Activated CD8-positive, alpha-beta T cell treated with anti-CD3 and anti-CD28 coated beads for 36 hours (primary cell): ENCODE measurements at regions of chr10 and their contacts with region 1.

Region 1: DNA sequence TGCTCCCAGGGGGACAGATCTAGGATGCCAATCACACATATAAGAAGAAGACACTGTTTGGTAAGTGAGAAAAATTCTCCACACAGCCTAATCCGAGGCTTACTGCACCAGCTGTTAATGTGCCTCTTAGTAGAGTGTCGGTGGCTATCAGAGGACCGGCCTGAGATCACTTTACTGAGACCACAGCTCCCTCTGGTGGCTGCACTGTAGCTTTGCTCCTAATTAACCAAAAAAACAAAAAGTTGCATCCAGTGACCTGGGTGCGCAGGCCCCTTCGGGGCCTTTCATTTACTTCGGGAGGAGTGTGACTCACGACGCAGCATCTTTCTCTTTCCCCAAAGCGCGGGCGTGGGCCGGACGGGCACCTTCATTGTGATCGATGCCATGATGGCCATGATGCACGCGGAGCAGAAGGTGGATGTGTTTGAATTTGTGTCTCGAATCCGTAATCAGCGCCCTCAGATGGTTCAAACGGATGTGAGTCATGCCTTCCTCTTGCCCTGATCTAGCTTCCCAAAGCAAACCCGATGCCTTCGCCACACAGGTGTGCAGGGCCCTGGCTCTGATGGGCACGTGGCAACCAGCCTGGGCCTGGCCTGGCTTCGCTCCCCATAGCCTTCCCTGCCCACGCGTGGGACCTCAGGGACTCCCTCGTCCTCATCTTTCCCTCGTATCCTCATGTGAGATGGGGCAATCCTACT is 56.7 kb downstream of the MKI67 start:
- DNase-seq: peak; percentile 81
- ATAC-seq: peak; percentile 27
- H3K4me3 Mint-ChIP-seq: no peak overlapping the region
- H3K27ac Mint-ChIP-seq: no peak overlapping the region
- H3K4me1 Mint-ChIP-seq: peaks cover 29% of the 10 kb centered on the region
- H3K27me3 Mint-ChIP-seq: no peaks in the 10 kb centered on the region
- CTCF ChIP-seq: peak; percentile 87

Region 2: DNA sequence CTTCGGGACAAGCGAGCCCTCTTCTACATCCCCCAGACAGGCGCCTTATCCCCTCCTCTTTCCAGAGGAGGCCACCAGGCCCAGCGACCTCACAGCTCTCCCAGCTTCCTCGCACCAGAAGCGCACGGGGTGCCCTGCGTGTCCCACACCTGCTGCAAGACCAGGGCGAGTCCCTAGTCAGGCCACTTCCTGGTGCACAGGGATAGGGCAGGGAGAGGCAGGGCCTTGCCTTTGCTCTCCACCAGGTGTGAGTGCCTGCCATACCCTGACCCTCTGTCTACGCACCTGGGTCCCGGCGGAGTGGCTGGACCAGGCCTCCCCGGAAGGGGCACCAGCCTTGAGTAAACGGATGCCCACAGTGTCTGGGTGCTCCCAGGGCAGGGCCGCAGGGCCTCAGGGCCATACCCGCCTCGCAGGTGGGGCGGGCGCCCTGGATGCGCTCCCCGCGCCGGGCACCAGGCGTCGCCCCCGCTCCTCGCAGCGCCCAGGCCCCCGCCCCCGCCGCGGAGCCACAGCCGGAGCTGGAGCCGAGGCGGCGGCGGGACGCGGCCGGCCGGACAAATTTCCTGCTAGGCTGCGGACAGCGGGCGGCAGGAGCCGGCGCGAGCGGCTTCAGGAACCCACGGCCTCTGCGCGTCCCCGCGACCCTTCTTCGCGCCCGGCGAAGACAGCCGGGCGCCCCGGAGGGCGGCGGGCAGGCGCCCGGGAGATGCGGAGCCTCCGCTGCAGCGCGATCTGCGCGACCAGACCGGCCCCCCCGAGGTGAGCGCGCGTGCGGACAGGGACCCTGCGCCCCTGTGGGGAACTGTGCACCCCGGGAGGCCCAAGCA is 162.7 kb before region 1 on chr10 and contains the start of gene PTPRE:
- CTCF ChIA-PET with region 1: interaction called, 13 read pairs
- POLR2A ChIA-PET with region 1: no interaction called
- intact Hi-C with region 1: loop called (anchors 2 kb)
- DNase-seq: peak; percentile 73
- ATAC-seq: peak; percentile 99
- H3K4me3 Mint-ChIP-seq: no peak within 1 kb of the TSS
- H3K27ac Mint-ChIP-seq: no peak within 1 kb of the TSS
- H3K4me1 Mint-ChIP-seq: no peaks in the 10 kb centered on the region
- H3K27me3 Mint-ChIP-seq: peaks cover 31% of the 10 kb centered on the region
- CTCF ChIP-seq: peak; percentile 86
- total RNA-seq, gene PTPRE: 19.9 to 22.3 TPM

Region 3: DNA sequence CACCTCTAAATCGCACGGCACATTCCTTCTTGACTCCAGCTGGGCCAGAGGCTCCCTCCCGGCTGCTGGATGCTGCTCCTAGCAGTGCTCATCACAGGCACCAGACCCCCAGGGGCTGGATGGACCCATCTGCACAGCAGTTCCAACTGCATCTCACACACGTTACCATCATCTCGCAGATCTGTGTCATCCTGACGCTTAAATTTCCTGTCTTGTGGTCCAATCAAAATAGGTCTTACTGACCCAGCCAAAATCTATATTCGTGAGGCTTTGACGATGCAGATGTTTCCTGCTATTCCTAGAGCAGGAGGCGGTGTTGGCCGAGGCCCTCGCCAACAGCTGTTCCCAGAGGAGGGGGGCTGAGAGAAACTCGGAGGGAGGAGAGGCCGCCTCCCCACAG is 51.3 kb before region 1 on chr10:
- CTCF ChIA-PET with region 1: interaction called, 35 read pairs
- POLR2A ChIA-PET with region 1: no interaction called
- intact Hi-C with region 1: loop called (anchors 10 kb)
- DNase-seq: no peak
- ATAC-seq: peak; percentile 64
- H3K4me3 Mint-ChIP-seq: peak overlapping the region; percentile 47
- H3K27ac Mint-ChIP-seq: no peak overlapping the region
- H3K4me1 Mint-ChIP-seq: peaks cover 6% of the 10 kb centered on the region
- H3K27me3 Mint-ChIP-seq: peaks cover 4% of the 10 kb centered on the region
- CTCF ChIP-seq: no peak

Region 4: GRCh38 chr10:128026614-128027300 is 42.7 kb before region 1 on chr10:
- CTCF ChIA-PET with region 1: interaction called, 23 read pairs
- POLR2A ChIA-PET with region 1: interaction called, 8 read pairs
- intact Hi-C with region 1: no loop called
- DNase-seq: peak; percentile 84
- ATAC-seq: peak; percentile 87
- H3K4me3 Mint-ChIP-seq: no peak overlapping the region
- H3K27ac Mint-ChIP-seq: peak overlapping the region; percentile 75
- H3K4me1 Mint-ChIP-seq: peaks cover 31% of the 10 kb centered on the region
- H3K27me3 Mint-ChIP-seq: no peaks in the 10 kb centered on the region
- CTCF ChIP-seq: no peak

Region 5: DNA sequence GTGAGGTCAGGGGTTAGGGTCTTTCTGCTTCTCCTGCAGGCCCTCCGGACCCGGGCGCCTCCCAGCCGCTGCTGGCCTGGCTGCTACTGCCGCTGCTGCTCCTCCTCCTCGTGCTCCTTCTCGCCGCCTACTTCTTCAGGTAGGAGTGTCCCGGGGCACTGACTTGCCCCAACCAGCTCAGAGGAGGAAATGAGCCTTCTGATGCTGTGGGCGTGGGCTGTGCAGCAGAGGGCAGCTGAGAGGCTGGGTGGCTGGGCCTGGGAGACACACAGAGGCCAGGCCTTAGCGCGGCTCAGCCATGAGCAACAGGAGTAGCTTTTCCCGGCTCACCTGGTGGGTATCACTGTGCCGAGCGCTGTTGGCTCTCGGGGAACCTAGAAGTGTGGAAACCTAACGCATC is 22.1 kb before region 1 on chr10:
- CTCF ChIA-PET with region 1: interaction called, 37 read pairs
- POLR2A ChIA-PET with region 1: interaction called, 133 read pairs
- intact Hi-C with region 1: no loop called
- DNase-seq: peak; percentile 93
- ATAC-seq: peak; percentile 98
- H3K4me3 Mint-ChIP-seq: peak overlapping the region; percentile 90
- H3K27ac Mint-ChIP-seq: peak overlapping the region; percentile 95
- H3K4me1 Mint-ChIP-seq: peaks cover 41% of the 10 kb centered on the region
- H3K27me3 Mint-ChIP-seq: no peaks in the 10 kb centered on the region
- CTCF ChIP-seq: no peak

Region 6: DNA sequence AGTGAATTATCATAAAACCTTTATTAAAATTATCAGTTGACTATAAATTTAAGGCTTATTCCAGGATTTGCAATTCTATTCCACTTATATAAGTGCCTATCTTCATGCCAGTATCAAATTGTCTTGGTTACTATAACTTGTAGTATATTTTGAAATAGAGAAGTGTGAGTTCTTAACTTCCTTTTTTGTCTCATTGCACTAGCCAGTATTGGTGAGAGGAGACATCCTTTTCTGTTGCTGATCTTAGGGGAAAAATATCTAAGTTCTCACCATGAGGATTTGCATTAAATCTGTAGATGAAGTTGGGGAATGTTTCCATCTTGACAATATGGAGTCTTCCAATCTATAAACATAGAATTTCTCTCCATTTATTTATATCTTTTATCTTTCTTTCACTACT is 160.9 kb after region 1 on chr10:
- CTCF ChIA-PET with region 1: no interaction called
- POLR2A ChIA-PET with region 1: no interaction called
- intact Hi-C with region 1: no loop called
- DNase-seq: no peak
- ATAC-seq: no peak
- H3K4me3 Mint-ChIP-seq: no peak overlapping the region
- H3K27ac Mint-ChIP-seq: no peak overlapping the region
- H3K4me1 Mint-ChIP-seq: no peaks in the 10 kb centered on the region
- H3K27me3 Mint-ChIP-seq: peaks cover 3% of the 10 kb centered on the region
- CTCF ChIP-seq: no peak